ENCODE measurements at regions of chr9 and their contacts with region 1.

Region 1: DNA sequence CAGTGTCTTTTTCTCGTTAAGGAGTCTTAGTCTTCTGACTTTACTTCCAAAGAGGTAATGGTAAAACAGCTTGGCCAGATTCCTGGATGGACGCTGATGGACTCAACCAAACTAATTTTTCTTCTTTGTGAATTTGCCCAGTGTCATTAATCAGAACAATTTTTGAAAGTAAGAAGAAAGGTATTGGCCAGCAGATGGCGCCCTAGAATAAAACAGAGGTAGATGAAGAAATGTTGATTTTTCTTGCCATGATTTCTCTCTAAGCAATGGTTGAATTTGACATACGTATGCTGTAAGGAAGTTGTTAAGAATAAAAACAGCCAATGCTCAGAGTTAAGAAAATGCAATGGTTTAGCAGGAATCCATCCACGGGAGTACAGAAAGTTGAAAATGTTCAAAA is 500.0 kb downstream of the DIRAS2 start:
- DNase-seq: no peak
- ATAC-seq: no peak
- H3K4me3 Mint-ChIP-seq: no peak overlapping the region
- H3K27ac Mint-ChIP-seq: no peak overlapping the region
- H3K4me1 Mint-ChIP-seq: peaks cover 4% of the 10 kb centered on the region
- H3K27me3 Mint-ChIP-seq: peaks cover 19% of the 10 kb centered on the region
- CTCF ChIP-seq: peak; percentile 45

Region 2: GRCh38 chr9:89597711-89598625 is 544.6 kb before region 1 on chr9:
- CTCF ChIA-PET with region 1: interaction called, 13 read pairs
- POLR2A ChIA-PET with region 1: no interaction called
- intact Hi-C with region 1: no loop called
- DNase-seq: no peak
- ATAC-seq: peak; percentile 43
- H3K4me3 Mint-ChIP-seq: no peak overlapping the region
- H3K27ac Mint-ChIP-seq: no peak overlapping the region
- H3K4me1 Mint-ChIP-seq: peaks cover 1% of the 10 kb centered on the region
- H3K27me3 Mint-ChIP-seq: peaks cover 8% of the 10 kb centered on the region
- CTCF ChIP-seq: peak; percentile 23

Region 3: GRCh38 chr9:90175865-90176264 is 33.3 kb after region 1 on chr9:
- CTCF ChIA-PET with region 1: no interaction called
- POLR2A ChIA-PET with region 1: no interaction called
- intact Hi-C with region 1: loop called (anchors 5 kb)
- DNase-seq: no peak
- ATAC-seq: peak; percentile 54
- H3K4me3 Mint-ChIP-seq: no peak overlapping the region
- H3K27ac Mint-ChIP-seq: no peak overlapping the region
- H3K4me1 Mint-ChIP-seq: peaks cover 49% of the 10 kb centered on the region
- H3K27me3 Mint-ChIP-seq: no peaks in the 10 kb centered on the region
- CTCF ChIP-seq: no peak

Region 4: DNA sequence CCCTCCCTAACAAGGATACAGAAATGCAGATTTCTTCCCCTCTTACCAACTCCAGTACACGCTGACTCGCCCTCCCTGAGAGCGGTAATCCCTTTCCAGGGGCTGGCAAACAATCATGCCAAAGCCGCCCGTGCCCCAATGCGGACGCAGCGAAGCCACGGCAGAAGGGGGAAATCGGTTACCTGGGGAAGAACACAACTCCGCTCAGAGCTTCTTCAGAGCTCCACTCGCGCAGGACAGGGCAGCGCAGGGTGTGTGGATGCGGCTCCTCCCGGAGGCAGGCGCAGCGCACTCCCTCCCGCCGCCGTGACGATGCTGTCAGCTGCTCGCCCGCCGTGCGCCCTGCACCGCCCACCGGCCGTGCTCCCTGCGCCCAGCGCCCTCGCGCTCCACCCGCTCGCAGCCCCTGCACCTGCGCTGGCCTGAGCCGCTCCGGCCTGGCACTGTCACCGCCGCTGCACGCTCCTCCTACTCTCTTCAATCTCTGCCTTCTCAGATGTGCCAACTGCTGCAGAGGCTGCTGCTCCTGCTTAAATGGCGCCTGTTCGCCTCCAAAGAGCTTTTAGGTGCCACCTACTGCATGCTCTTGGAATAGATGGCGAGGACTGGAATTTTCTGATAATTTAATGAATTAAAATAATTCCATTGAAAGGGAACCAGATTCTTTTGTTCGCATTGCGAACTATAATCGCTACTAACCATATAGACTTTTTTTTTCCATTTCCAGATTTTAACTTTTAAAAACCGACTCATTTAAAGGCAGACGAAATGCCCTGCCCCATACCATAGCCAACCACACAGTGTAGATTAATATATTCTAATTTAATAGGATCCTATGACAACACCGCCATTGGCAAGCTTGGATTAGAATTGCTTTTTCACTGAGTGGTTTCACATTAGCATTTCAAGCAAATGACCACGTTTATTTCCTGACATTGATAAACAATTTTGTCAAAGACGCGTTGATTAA is 500.3 kb after region 1 on chr9 and contains the start of gene DIRAS2:
- CTCF ChIA-PET with region 1: no interaction called
- POLR2A ChIA-PET with region 1: no interaction called
- intact Hi-C with region 1: loop called (anchors 5 kb)
- DNase-seq: no peak
- ATAC-seq: peak; percentile 71
- H3K4me3 Mint-ChIP-seq: peak within 1 kb of the TSS; percentile 78
- H3K27ac Mint-ChIP-seq: no peak within 1 kb of the TSS
- H3K4me1 Mint-ChIP-seq: peaks cover 13% of the 10 kb centered on the region
- H3K27me3 Mint-ChIP-seq: peaks cover 58% of the 10 kb centered on the region
- CTCF ChIP-seq: no peak
- total RNA-seq, gene DIRAS2: not detected in 2 replicates

Region 5: GRCh38 chr9:90870621-90871326 is 728.2 kb after region 1 on chr9:
- CTCF ChIA-PET with region 1: interaction called, 3 read pairs
- POLR2A ChIA-PET with region 1: no interaction called
- intact Hi-C with region 1: loop called (anchors 1 kb)
- DNase-seq: no peak
- ATAC-seq: no peak
- H3K4me3 Mint-ChIP-seq: no peak overlapping the region
- H3K27ac Mint-ChIP-seq: peak overlapping the region; percentile 74
- H3K4me1 Mint-ChIP-seq: peaks cover 4% of the 10 kb centered on the region
- H3K27me3 Mint-ChIP-seq: no peaks in the 10 kb centered on the region
- CTCF ChIP-seq: peak; percentile 97

Measured in activated B cell treated with CpG ODN at 0.5 μM for 24 hours (primary cell).